CD8-positive, alpha-beta T cell (primary cell): ENCODE measurements at regions of chr9 and their contacts with region 1.

Region 1: GRCh38 chr9:109063760-109064159 is 50.5 kb upstream of the CTNNAL1 start:
- DNase-seq: no peak
- ATAC-seq: no peak
- H3K4me3 ChIP-seq: no peak overlapping the region
- H3K4me3 Mint-ChIP-seq: no peak overlapping the region
- H3K27ac ChIP-seq: no peak overlapping the region
- H3K27ac Mint-ChIP-seq: no peak overlapping the region
- H3K4me1 ChIP-seq: no peaks in the 10 kb centered on the region
- H3K4me1 Mint-ChIP-seq: no peaks in the 10 kb centered on the region
- H3K27me3 ChIP-seq: no peaks in the 10 kb centered on the region
- H3K27me3 Mint-ChIP-seq: no peaks in the 10 kb centered on the region
- CTCF ChIP-seq: no peak

Region 2: DNA sequence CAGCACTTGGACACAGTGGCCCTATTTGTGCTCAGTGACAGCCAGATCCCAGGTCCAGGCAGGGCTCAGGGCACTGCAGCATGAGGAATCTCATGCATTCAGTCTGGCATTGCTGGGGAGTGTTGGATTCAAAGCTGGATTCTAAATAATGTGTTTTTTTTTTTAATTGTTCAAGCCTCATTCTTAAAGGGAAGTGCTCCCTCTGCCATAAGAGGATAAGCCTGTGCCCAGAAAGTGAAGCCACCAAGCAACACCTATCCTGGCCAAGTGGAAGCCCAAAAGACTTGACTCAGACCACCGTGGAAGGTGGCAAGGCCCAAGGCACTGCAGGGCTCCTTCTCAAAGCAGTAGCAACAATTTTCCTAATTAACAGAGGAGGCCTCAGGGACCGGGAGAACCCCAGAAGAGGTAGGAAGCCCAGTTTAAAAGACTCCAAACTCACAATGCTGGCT is 343.5 kb before region 1 on chr9:
- CTCF ChIA-PET with region 1: no interaction called
- POLR2A ChIA-PET with region 1: no interaction called
- intact Hi-C with region 1: no loop called
- DNase-seq: no peak
- ATAC-seq: no peak
- H3K4me3 ChIP-seq: no peak overlapping the region
- H3K4me3 Mint-ChIP-seq: no peak overlapping the region
- H3K27ac ChIP-seq: no peak overlapping the region
- H3K27ac Mint-ChIP-seq: no peak overlapping the region
- H3K4me1 ChIP-seq: no peaks in the 10 kb centered on the region
- H3K4me1 Mint-ChIP-seq: no peaks in the 10 kb centered on the region
- H3K27me3 ChIP-seq: no peaks in the 10 kb centered on the region
- H3K27me3 Mint-ChIP-seq: no peaks in the 10 kb centered on the region
- CTCF ChIP-seq: no peak

Region 3: DNA sequence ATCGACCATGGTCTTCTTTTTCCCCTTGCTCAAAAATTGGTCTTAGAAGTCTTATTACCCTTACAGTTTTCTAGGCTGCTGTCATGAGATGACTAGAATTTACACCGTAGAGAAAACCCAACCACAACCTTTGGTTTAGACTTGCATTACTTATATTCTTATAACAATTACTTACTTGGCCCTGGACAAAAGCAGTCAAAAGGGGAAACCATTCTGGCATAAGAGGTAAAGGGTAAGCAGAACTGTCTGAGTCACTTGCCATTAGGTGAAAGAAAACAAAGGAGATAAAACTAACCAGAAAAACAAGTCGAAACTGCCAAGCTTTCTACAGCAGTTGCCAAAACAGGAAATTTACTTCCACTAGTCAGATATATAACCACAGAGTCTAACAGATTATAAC is 38.0 kb after region 1 on chr9:
- CTCF ChIA-PET with region 1: interaction called, 3 read pairs
- POLR2A ChIA-PET with region 1: no interaction called
- intact Hi-C with region 1: loop called in 1 of 2 experiments (anchors 5 kb)
- DNase-seq: peak in 2 of 9 experiments; percentile 38 to 73
- ATAC-seq: peak; percentile 72
- H3K4me3 ChIP-seq: peak overlapping the region; percentile 21 to 38
- H3K4me3 Mint-ChIP-seq: peak overlapping the region; percentile 73
- H3K27ac ChIP-seq: peak overlapping the region; percentile 54 to 71
- H3K27ac Mint-ChIP-seq: peak overlapping the region; percentile 90
- H3K4me1 ChIP-seq: peaks cover 51% of the 10 kb centered on the region
- H3K4me1 Mint-ChIP-seq: peaks cover 66% of the 10 kb centered on the region
- H3K27me3 ChIP-seq: no peaks in the 10 kb centered on the region
- H3K27me3 Mint-ChIP-seq: no peaks in the 10 kb centered on the region
- CTCF ChIP-seq: no peak

Region 4: DNA sequence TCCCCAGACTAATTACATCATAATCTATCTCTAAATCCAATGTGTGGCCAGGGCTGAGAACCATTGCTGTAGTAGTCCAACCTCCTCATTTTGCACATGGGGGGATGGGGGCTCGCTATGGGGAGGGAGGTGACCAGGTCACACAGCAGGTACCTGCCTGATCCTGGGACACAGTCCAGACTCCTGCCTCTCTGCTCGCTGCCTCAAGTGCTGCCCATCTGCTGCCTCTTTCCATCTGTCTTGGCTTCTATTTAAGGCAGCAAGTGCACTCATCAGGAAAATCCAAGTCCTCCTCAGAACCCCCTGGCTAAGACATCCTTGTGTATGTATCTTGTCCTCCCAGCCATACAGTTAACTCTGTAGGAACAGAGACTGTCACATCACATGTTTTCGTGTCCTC is 161.0 kb after region 1 on chr9:
- CTCF ChIA-PET with region 1: no interaction called
- POLR2A ChIA-PET with region 1: no interaction called
- intact Hi-C with region 1: no loop called
- DNase-seq: no peak
- ATAC-seq: no peak
- H3K4me3 ChIP-seq: no peak overlapping the region
- H3K4me3 Mint-ChIP-seq: no peak overlapping the region
- H3K27ac ChIP-seq: no peak overlapping the region
- H3K27ac Mint-ChIP-seq: no peak overlapping the region
- H3K4me1 ChIP-seq: no peaks in the 10 kb centered on the region
- H3K4me1 Mint-ChIP-seq: no peaks in the 10 kb centered on the region
- H3K27me3 ChIP-seq: peaks cover 0 to 2% of the 10 kb centered on the region in 2 experiments
- H3K27me3 Mint-ChIP-seq: peaks cover 19% of the 10 kb centered on the region
- CTCF ChIP-seq: no peak